Sciatic nerve (tissue), 2 donors: ENCODE measurements at regions of chr9 and their contacts with region 1.

Region 1: DNA sequence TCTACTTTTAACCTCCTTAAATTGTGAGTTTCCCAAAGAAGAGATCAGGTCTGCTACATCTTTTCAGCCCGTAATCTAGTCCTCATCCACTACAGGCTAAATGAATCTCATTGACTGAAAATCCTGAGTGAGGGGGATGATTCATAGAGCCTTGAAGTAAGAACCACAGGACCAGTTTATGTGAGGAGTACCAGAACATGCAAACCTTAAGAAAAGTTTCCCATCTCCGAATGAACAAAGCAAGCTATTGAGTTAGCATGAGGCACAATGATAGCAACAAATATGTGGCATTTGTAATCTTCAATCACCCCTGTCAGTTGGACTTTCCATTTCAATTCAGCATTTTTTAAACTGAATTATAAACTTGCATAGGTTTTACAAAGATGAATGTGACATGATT is 197.0 kb downstream of the ALDH1A1 start:
- DNase-seq: no peak
- ATAC-seq: no peak

Region 2: DNA sequence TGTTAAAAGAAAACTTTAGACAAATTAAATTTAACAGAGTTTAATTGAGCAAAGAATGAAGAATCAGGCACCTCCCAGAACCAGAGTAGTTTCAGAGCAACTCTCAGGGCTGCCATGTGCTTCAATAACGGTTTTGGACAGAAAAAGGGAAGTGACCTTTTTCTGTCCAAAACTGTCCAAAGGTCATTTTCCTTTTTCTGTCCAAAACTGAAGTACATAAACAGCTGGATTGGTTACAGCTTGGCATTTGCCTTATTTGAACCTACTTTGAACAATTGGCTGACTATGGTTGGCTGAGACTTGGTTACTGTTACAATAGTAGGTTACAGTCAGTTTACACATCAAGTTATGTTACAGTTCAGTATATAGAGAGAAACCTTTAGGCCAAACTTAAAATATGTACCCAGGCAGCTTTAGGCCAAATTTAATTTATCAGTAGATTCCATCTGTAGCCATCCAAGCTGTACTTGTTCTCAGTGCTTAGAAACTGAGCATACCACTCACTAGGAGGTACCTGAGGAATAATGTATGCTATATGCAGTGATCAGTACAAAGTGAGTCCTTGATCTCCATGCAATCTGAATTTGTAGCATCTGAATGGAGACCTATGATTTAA is 800.4 kb before region 1 on chr9:
- intact Hi-C with region 1: loop called (anchors 5 kb)
- DNase-seq: no peak
- ATAC-seq: no peak

Region 3: GRCh38 chr9:72635197-72635596 is 120.6 kb before region 1 on chr9:
- intact Hi-C with region 1: no loop called
- DNase-seq: no peak
- ATAC-seq: no peak